SK-N-SH (cell line): ENCODE measurements at regions of chr20 and their contacts with region 1.

Region 1: GRCh38 chr20:56187534-56188198 is 60.9 kb upstream of the MC3R start:
- DNase-seq: peak; percentile 42
- H3K4me3 ChIP-seq: no peak overlapping the region
- H3K27ac ChIP-seq: no peak overlapping the region
- H3K4me1 ChIP-seq: peaks cover 0 to 10% of the 10 kb centered on the region in 2 experiments; a peak in 1 of 4 replicates
- H3K27me3 ChIP-seq: no peaks in the 10 kb centered on the region
- CTCF ChIP-seq: no peak
- EP300 ChIP-seq: no peak
- RAD21 ChIP-seq: peak; percentile 61

Region 2: DNA sequence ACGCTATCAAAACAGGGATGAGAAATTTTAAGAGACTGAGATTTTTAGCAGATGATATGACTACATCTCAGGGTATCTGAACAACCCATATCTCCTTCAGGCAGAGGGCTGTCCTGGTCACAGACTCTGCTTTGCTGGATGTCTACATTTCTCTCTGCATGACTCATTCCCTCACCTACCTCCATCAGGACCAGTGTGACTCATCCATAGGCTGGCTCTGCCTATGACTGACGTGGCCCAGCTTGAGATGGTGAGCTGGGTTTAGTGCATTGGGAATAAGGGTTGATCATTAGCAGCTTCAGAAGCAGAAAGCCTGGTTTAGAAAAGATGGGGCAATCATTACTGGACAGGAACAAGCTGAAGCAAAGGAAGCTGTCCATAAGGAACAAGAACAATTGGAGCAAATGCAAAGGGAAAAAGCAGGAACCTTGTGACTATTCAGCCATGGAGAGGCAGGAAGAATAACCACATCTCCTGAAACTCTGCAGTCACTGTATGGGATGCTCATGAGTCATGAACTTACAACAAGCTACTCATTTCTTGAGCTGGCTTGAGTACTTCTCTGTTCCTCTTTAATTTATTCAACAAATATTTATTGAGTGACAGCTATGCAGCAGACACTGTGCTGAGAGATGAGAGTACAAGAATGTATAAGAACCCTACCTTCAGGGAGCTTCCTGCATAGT is 95.9 kb before region 1 on chr20:
- CTCF ChIA-PET with region 1: no interaction called
- POLR2A ChIA-PET with region 1: no interaction called
- DNase-seq: no peak
- H3K4me3 ChIP-seq: no peak overlapping the region
- H3K27ac ChIP-seq: no peak overlapping the region
- H3K4me1 ChIP-seq: no peaks in the 10 kb centered on the region
- H3K27me3 ChIP-seq: no peaks in the 10 kb centered on the region
- CTCF ChIP-seq: no peak
- EP300 ChIP-seq: no peak
- RAD21 ChIP-seq: no peak

Region 3: GRCh38 chr20:56202493-56203077 is 14.9 kb after region 1 on chr20:
- CTCF ChIA-PET with region 1: interaction called, 14 read pairs
- POLR2A ChIA-PET with region 1: no interaction called
- DNase-seq: peak; percentile 44
- H3K4me3 ChIP-seq: no peak overlapping the region
- H3K27ac ChIP-seq: no peak overlapping the region
- H3K4me1 ChIP-seq: no peaks in the 10 kb centered on the region
- H3K27me3 ChIP-seq: no peaks in the 10 kb centered on the region
- CTCF ChIP-seq: peak; percentile 28
- EP300 ChIP-seq: no peak
- RAD21 ChIP-seq: peak; percentile 64